PC-9 (cell line): ENCODE measurements at regions of chr14 and their contacts with region 1.

Region 1: DNA sequence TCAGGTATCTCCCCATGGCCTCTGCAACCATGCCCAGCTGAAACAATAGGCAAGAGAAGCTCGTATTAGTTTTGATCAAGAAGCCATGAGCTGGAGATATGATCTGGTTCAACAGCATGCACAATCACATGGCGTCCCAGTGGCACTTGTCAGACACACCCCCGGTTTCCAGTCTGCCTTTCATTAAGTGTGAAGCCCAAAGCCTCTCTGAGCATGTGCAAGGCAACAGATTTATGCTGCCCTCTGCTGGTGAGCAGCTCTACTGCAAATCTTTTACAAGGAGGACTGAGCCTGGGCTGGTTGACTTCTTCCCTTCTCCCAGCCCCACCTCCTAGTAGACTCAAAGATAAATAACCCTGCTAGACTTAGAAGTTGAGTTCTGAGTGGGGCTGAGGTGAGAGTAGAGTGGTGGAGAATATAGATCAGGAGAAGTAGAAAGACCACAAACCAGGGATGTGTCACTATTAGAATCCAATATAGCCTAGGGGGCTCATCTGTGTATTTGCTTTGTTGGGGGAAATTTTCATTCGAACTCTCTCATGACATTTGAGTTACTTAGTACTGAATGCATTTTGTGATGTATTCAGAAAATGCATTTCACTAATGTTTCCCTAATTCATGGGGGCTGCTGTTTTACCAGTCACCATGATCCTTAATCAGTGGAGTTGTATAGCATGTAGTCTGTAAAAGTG is 53.7 kb upstream of the MBIP start:
- DNase-seq: peak; percentile 42 to 55
- H3K4me3 ChIP-seq: no peak overlapping the region
- H3K27ac ChIP-seq: no peak overlapping the region
- H3K4me1 ChIP-seq: no peaks in the 10 kb centered on the region
- H3K27me3 ChIP-seq: no peaks in the 10 kb centered on the region
- CTCF ChIP-seq: peak; percentile 82

Region 2: GRCh38 chr14:35503656-35504055 is 870.5 kb before region 1 on chr14:
- CTCF ChIA-PET with region 1: no interaction called
- POLR2A ChIA-PET with region 1: no interaction called
- intact Hi-C with region 1: no loop called
- DNase-seq: no peak
- H3K4me3 ChIP-seq: no peak overlapping the region
- H3K27ac ChIP-seq: no peak overlapping the region
- H3K4me1 ChIP-seq: no peaks in the 10 kb centered on the region
- H3K27me3 ChIP-seq: no peaks in the 10 kb centered on the region
- CTCF ChIP-seq: no peak

Region 3: DNA sequence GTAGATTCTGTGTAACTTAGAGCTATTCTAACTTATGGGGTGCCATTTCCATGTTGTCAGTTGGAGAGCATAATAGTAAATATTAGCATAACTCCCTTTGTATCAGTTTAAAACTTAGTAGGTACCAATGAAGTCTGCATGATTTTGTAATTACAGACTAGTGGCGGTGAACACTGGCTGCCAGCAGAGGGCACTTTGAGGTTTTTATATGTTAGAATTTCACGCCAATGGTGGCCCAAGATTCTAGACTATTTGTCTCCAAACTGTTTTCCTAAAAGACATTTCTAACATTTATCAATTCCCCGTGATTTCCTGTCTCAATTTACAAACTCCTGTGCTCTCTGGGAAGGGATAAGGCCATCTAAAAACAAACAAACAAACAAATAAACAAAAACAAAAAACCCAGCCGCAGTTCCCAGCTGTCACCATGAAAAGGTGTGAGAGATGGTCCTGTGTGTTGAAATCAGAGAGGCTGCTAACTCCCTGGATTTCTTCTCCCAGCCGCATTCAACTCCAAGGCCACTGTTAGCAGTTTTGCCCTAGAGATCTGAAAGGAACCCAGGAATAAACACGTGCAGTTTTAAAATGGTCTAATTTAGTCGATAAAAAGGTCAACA is 490.3 kb before region 1 on chr14:
- CTCF ChIA-PET with region 1: no interaction called
- POLR2A ChIA-PET with region 1: no interaction called
- intact Hi-C with region 1: loop called (anchors 5 kb)
- DNase-seq: peak in 1 of 2 experiments; percentile 17
- H3K4me3 ChIP-seq: no peak overlapping the region
- H3K27ac ChIP-seq: no peak overlapping the region
- H3K4me1 ChIP-seq: peaks cover 7% of the 10 kb centered on the region
- H3K27me3 ChIP-seq: no peaks in the 10 kb centered on the region
- CTCF ChIP-seq: peak; percentile 64

Region 4: GRCh38 chr14:36105401-36105800 is 268.7 kb before region 1 on chr14:
- CTCF ChIA-PET with region 1: interaction called, 6 read pairs
- POLR2A ChIA-PET with region 1: no interaction called
- intact Hi-C with region 1: loop called (anchors 1 kb)
- DNase-seq: peak in 1 of 2 experiments; percentile 7
- H3K4me3 ChIP-seq: no peak overlapping the region
- H3K27ac ChIP-seq: no peak overlapping the region
- H3K4me1 ChIP-seq: no peaks in the 10 kb centered on the region
- H3K27me3 ChIP-seq: no peaks in the 10 kb centered on the region
- CTCF ChIP-seq: no peak

Region 5: DNA sequence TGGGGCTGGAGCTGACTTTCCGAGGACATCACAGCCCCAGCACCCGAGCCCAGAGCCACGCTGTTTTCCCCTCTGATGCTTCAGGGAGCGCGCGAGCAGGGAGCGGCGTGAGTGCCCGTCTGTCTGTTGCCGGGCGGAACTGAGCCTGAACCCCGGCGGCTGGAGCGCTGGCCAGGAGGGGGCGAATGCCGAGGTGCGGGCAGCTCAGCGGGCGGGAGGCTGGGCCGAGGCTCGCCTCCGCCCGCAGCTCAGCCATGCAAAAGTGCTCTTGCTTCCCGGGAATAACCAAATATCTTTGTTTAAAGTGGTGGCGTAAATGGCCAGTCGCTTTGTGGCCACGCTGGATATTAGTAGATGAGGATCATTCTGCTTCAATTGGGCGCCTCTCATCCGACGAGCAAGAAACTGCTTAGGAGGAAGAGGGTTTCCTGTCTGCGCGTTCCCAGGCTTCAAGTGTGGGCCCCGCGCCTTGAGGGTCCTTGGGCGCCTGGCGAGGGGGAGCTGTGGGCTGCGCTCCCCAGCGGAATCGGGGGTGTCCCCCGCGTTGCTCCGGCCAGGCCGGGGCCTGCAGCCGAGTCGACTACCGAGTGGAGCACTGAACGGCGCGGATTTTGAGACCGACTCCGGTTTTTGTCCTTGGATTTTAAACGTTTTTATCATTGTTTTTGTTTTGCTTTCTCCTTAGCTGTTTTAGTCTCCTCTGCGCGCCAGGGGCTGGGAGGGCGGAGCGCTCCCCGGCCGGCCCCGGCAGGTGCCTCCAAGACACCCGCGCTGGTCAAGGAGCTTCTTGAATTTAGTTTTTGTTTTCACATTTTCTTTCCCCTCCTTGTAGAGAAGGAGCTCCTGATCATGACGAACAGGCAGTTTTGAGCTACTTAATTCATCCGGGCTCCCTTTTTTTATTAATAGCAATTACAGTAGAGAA is 146.7 kb after region 1 on chr14:
- CTCF ChIA-PET with region 1: no interaction called
- POLR2A ChIA-PET with region 1: no interaction called
- intact Hi-C with region 1: loop called (anchors 10 kb)
- DNase-seq: peak in 1 of 2 experiments; percentile 52
- H3K4me3 ChIP-seq: peak overlapping the region; percentile 40; the same call in 1 of the 2 replicates
- H3K27ac ChIP-seq: no peak overlapping the region
- H3K4me1 ChIP-seq: no peaks in the 10 kb centered on the region
- H3K27me3 ChIP-seq: peaks cover 1% of the 10 kb centered on the region; the same call in 1 of the 2 replicates
- CTCF ChIP-seq: no peak

Region 6: DNA sequence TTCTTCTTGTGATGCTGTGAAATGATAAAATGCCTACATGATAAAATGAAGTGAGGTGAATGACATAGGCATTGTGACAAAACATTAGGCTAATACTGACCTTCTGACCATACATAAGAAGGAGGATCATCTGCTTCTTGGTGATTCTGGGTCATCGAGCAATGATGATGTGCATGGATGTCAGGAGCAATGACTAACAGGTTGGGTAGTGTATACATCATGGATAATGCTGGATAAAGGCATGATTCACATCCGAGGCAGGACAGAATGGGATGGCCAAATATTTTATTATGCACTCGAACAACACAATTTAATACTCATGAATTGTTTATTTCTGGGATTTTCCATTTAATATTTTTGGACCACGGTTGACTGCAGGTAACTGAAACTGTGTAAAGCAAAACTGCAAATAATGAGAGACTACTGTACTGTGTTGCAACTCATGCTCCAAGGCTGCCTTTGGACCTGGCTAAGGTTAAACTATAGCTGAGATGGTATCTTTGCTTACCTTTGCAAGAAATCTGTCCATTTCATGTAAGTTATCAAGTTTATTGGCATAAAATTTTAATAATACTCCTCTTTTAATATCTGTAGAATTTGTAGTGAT is 805.9 kb after region 1 on chr14:
- CTCF ChIA-PET with region 1: no interaction called
- POLR2A ChIA-PET with region 1: no interaction called
- intact Hi-C with region 1: no loop called
- DNase-seq: no peak
- H3K4me3 ChIP-seq: no peak overlapping the region
- H3K27ac ChIP-seq: no peak overlapping the region
- H3K4me1 ChIP-seq: no peaks in the 10 kb centered on the region
- H3K27me3 ChIP-seq: no peaks in the 10 kb centered on the region
- CTCF ChIP-seq: no peak